ENCODE measurements at regions of chr22 and their contacts with region 1.

Region 1: DNA sequence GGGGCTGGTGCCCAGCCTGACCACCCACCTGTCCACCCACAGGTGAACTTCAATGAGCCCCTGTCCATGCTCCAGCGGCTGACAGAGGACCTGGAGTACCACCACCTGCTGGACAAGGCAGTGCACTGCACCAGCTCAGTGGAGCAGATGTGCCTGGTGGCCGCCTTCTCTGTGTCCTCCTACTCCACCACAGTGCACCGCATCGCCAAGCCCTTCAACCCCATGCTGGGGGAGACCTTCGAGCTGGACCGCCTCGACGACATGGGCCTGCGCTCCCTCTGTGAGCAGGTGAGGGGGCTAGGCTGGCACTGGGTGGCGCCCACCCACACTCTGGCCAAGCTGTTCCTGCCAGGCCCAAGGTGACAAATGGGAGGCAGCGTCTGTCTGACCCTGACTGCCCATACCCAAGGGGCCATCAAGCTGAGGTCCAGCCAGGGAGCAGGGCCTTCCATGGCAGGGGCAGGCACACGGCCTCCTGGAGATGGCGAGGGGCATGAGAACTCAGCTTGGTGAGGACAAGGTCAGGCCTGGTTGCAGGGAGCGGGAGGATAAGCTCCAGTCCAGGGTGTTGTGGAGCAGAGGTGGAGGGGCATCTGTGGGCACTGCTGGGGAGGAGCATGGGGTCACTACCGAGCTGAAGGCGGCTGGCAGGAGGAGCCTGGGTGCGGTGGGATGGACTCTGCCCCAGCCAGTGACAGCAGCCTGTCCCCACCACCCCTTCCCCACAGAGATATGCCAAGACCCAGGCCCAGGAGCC is 77.7 kb downstream of the MORC2 start:
- DNase-seq: peak; percentile 22
- H3K4me3 ChIP-seq: no peak overlapping the region
- H3K27ac ChIP-seq: no peak overlapping the region
- H3K4me1 ChIP-seq: no peaks in the 10 kb centered on the region
- H3K27me3 ChIP-seq: no peaks in the 10 kb centered on the region
- CTCF ChIP-seq: peak; percentile 91 to 93

Region 2: DNA sequence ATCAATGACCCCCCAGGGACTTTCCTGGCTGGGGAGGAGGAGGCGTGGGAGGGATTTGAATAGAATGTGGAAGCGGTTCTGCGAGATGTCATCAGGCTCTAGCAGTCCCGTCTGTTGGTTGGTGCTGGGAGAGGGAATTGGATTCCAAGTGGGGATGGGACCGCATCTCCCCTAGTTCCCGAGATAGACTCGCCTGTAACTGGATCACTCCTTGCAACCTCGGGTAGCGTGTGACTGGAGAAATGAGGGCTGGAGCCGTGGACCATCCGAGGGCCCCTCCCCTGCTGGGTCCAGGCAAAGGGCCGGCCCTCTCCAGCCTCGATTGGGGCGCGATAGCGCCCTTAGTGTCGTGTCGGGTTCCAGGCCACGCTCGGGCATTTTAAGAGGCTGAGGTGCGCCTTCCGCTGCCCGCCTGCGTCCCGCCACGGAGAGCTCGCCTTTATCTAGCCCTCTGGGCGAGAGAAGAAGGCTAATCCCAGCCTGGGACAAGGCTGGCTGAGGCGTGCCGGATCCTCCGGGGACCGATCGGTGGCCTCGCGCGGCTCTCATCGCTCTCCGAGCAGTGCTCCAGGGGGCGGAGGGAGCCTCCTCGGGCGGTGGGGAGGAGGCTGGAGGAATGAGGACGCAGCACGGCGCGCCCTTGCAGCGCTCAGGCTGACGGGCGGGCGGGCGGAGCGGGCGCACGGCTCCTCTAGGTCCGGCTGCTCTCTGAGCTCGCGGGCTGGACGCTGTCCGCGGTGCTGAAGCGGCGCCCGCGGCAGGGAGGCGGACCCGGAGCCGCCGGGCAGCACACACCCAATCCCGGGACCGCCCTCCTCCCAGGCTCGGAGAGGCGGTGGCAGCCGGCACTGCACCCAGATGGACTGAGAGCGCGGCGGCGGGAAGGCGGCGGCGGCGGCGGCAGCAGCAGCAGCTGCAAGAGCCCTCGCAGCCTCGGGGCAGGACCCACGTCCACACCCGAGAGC is 88.4 kb before region 1 on chr22:
- CTCF ChIA-PET with region 1: no interaction called
- dilution Hi-C with region 1: loop called (anchors 5 kb)
- in situ Hi-C with region 1: no loop called
- intact Hi-C with region 1: no loop called
- DNase-seq: peak; percentile 95
- H3K4me3 ChIP-seq: peak overlapping the region; percentile 51 to 57 (median 55)
- H3K27ac ChIP-seq: no peak overlapping the region
- H3K4me1 ChIP-seq: peaks cover 33% of the 10 kb centered on the region
- H3K27me3 ChIP-seq: no peaks in the 10 kb centered on the region
- CTCF ChIP-seq: peak in 1 of 2 donors; percentile 38

Region 3: DNA sequence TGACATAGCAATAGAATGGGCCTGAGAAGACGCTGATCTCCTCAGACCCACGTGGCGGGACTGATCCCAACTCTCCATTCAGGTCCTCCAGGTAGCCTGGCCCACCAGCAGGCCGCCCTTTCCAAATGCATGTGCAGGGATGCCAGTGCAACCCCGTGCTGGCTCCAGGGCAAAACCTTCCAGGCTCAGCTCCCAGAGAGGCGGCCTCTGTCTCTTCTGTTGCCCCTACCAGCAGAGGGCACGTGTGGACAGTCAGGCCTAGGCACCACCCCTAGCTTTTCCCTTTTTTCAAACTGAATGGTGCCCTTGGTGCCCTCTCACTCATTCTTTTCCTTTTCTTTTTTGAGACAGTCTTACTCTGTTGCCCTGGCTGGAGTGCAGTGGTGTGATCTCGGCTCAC is 74.5 kb before region 1 on chr22:
- CTCF ChIA-PET with region 1: interaction called, 4 read pairs
- dilution Hi-C with region 1: no loop called
- in situ Hi-C with region 1: no loop called
- intact Hi-C with region 1: loop called (anchors 1 kb)
- DNase-seq: no peak
- H3K4me3 ChIP-seq: no peak overlapping the region
- H3K27ac ChIP-seq: no peak overlapping the region
- H3K4me1 ChIP-seq: no peaks in the 10 kb centered on the region
- H3K27me3 ChIP-seq: no peaks in the 10 kb centered on the region
- CTCF ChIP-seq: peak; percentile 3 to 36

Region 4: DNA sequence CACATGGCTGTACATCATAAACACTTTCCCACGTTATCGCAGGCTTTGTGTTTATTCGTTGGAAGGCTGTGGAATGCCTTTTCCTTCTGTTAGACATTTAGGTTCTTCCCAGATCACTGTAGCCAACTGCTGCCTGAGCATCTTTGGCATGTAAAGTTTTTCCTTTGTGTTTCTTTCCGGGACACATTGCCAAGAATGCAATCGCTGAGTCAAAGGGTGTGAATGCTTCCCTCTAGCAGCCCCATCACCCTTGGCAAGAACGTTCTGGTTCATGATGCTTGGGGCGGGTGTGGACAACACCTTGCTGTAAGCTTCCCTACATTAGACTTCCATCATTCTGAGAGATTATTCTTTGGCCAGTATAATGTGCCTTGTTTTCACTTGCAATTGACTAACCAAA is 60.0 kb before region 1 on chr22:
- CTCF ChIA-PET with region 1: no interaction called
- dilution Hi-C with region 1: no loop called
- in situ Hi-C with region 1: no loop called
- intact Hi-C with region 1: loop called (anchors 5 kb)
- DNase-seq: peak; percentile 97
- H3K4me3 ChIP-seq: no peak overlapping the region
- H3K27ac ChIP-seq: peak overlapping the region; percentile 99
- H3K4me1 ChIP-seq: peaks cover 27% of the 10 kb centered on the region
- H3K27me3 ChIP-seq: no peaks in the 10 kb centered on the region
- CTCF ChIP-seq: no peak

Region 5: GRCh38 chr22:30920407-30920806 is 29.5 kb after region 1 on chr22:
- CTCF ChIA-PET with region 1: interaction called, 5 read pairs
- dilution Hi-C with region 1: no loop called
- in situ Hi-C with region 1: no loop called
- intact Hi-C with region 1: loop called (anchors 1 kb)
- DNase-seq: peak; percentile 52
- H3K4me3 ChIP-seq: no peak overlapping the region
- H3K27ac ChIP-seq: no peak overlapping the region
- H3K4me1 ChIP-seq: peaks cover 9% of the 10 kb centered on the region
- H3K27me3 ChIP-seq: no peaks in the 10 kb centered on the region
- CTCF ChIP-seq: peak; percentile 75 to 89

Region 6: DNA sequence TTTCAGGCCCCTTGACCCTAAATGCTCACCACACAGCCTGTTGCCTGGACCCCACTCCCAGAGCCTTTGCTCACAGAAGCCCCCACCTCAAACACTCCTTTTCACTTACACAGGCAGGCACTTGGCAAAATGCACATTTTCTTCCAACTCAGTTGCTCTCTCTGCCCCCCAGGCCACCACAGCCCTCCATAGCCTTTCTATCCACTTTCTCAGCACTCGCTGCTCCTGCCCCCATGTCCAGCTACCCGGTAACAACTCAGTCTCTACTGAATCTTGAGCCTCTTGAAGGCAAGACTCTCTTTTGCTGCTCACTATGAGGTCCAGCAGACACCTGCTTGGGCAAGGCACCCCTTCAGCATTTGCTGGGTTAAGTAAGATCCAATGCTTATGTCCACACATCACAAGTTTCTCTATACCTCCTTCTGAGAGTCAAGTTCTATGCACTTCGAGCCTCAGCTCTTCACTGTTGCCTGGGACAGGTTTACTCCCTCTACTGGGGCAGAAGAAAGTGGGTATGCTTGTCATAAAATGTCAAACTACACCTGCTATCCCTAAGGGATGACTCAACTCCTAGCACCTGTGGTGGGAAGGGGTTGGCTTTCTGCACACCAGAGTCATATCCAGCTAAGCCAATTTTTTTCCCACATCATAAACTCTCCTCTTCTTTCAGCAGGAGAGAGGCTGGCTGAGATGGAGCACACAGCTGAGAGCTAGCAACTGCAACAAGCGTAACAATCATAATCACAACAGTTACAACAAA is 40.9 kb after region 1 on chr22:
- CTCF ChIA-PET with region 1: no interaction called
- dilution Hi-C with region 1: loop called (anchors 5 kb)
- in situ Hi-C with region 1: no loop called
- intact Hi-C with region 1: no loop called
- DNase-seq: no peak
- H3K4me3 ChIP-seq: no peak overlapping the region
- H3K27ac ChIP-seq: no peak overlapping the region
- H3K4me1 ChIP-seq: no peaks in the 10 kb centered on the region
- H3K27me3 ChIP-seq: no peaks in the 10 kb centered on the region
- CTCF ChIP-seq: no peak

Region 7: DNA sequence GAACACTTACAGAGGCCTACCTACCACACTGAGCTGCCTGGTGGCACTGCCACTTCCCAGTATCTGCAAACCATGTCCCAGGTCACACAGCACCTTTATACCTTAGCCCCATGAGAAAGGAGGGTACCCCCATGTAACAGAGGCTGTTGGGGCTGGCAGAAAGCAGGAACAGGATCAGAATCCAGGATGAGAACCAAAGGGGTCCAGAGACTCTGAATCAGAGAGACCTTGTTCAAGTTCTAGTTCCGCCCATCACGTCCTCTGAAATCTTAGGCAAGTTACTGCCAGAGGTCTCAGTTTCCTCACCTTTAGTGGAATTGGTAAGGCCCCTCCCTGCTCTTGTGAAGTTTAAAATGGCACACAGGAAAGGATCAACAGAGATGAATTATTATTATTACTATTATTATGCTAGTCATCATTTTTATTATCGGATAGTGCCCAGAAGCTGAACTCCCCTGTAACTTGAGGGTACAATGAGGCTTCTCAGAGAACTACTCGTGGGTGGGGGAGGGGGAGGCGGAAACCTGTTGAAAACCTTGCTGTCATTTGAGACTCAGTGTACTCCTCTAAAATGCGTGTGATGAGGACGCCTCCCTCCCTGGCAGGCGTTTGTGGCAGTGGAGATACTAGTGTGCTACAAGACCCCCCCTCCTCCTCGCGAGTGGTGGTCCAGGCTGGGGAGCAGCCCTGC is 207.2 kb after region 1 on chr22:
- CTCF ChIA-PET with region 1: interaction called, 11 read pairs
- dilution Hi-C with region 1: no loop called
- in situ Hi-C with region 1: no loop called
- intact Hi-C with region 1: no loop called
- DNase-seq: no peak
- H3K4me3 ChIP-seq: no peak overlapping the region
- H3K27ac ChIP-seq: no peak overlapping the region
- H3K4me1 ChIP-seq: no peaks in the 10 kb centered on the region
- H3K27me3 ChIP-seq: no peaks in the 10 kb centered on the region
- CTCF ChIP-seq: no peak

Measured in mammary epithelial cell (primary cell).